CD4-positive, alpha-beta T cell (primary cell): ENCODE measurements at regions of chr21 and their contacts with region 1.

Region 1: GRCh38 chr21:45439161-45439872 is 34.4 kb downstream of the COL18A1 start:
- DNase-seq: peak; percentile 73 to 92 (median 84)
- ATAC-seq: peak; percentile 85
- H3K4me3 ChIP-seq: peak overlapping the region; percentile 38
- H3K4me3 Mint-ChIP-seq: peak overlapping the region; percentile 74
- H3K27ac ChIP-seq: no peak overlapping the region
- H3K27ac Mint-ChIP-seq: peak overlapping the region; percentile 73
- H3K4me1 ChIP-seq: peaks cover 21% of the 10 kb centered on the region
- H3K4me1 Mint-ChIP-seq: peaks cover 21% of the 10 kb centered on the region
- H3K27me3 ChIP-seq: peaks cover 0 to 2% of the 10 kb centered on the region in 2 experiments
- H3K27me3 Mint-ChIP-seq: peaks cover 8% of the 10 kb centered on the region
- CTCF ChIP-seq: peak; percentile 91

Region 2: GRCh38 chr21:44949779-44950198 is 489.5 kb before region 1 on chr21:
- CTCF ChIA-PET with region 1: no interaction called
- POLR2A ChIA-PET with region 1: no interaction called
- intact Hi-C with region 1: loop called in 1 of 2 experiments (anchors 10 kb)
- DNase-seq: peak; percentile 73 to 91 (median 82)
- ATAC-seq: peak; percentile 88
- H3K4me3 ChIP-seq: no peak overlapping the region
- H3K4me3 Mint-ChIP-seq: no peak overlapping the region
- H3K27ac ChIP-seq: no peak overlapping the region
- H3K27ac Mint-ChIP-seq: no peak overlapping the region
- H3K4me1 ChIP-seq: peaks cover 16% of the 10 kb centered on the region
- H3K4me1 Mint-ChIP-seq: peaks cover 5% of the 10 kb centered on the region
- H3K27me3 ChIP-seq: no peaks in the 10 kb centered on the region
- H3K27me3 Mint-ChIP-seq: no peaks in the 10 kb centered on the region
- CTCF ChIP-seq: peak; percentile 92

Region 3: DNA sequence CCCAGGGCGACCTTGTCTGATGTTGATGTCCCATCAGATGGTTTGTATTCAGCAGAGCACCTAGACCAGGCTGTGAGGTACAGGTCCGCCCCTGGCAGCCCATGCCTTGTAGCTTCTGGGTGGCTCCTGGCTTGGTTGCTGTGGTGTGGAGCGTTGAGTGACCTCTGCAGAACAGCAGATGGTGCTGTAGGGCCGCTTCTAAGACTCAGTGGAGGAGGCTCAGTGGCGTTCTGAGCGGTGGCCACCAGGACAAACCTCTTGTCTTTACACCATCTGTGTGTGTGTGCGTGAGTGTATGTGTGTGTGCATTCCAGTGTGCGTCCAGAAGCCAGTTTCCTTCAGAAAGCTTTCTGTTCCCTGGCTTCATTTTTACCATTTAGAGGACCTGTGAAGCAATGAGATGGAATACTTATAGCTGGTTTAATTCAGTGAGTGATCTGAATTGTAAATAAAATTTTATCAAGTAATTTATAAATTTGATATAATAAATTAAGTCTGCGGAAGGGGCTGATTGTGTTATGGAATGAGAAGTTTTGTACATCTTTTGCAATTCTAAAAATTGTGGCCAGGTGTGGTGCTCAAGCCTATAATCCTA is 298.9 kb before region 1 on chr21:
- CTCF ChIA-PET with region 1: no interaction called
- POLR2A ChIA-PET with region 1: no interaction called
- intact Hi-C with region 1: loop called in 1 of 2 experiments (anchors 1 kb)
- DNase-seq: peak; percentile 30 to 83 (median 50)
- ATAC-seq: peak; percentile 93
- H3K4me3 ChIP-seq: no peak overlapping the region
- H3K4me3 Mint-ChIP-seq: no peak overlapping the region
- H3K27ac ChIP-seq: no peak overlapping the region
- H3K27ac Mint-ChIP-seq: no peak overlapping the region
- H3K4me1 ChIP-seq: peaks cover 12% of the 10 kb centered on the region
- H3K4me1 Mint-ChIP-seq: peaks cover 21% of the 10 kb centered on the region
- H3K27me3 ChIP-seq: no peaks in the 10 kb centered on the region
- H3K27me3 Mint-ChIP-seq: no peaks in the 10 kb centered on the region
- CTCF ChIP-seq: peak; percentile 48

Region 4: DNA sequence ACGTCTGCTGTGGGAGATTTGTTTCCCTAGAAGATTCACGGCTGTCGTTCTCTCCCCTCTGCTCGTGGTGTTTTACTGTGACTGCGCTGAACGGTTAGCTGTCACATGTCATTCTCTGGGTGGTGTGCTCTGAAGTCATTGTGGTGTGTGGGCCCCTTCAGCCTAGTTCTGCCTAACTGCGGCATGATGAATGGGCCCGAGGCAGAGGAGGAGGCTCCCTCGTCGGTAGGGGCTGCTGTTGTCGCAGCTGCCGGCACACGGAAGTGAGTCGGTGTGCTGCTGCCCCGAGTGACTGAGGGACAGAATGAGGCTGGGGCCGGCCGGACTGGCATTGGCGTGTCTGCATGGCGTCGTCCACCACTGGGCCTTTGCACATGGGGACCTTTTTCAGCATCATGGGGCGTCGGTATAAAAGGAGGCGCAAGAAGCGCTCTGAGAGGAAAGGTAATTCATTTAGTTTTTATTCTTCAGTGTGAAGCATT is 287.0 kb before region 1 on chr21:
- CTCF ChIA-PET with region 1: interaction called, 3 read pairs
- POLR2A ChIA-PET with region 1: no interaction called
- intact Hi-C with region 1: loop called in 1 of 2 experiments (anchors 1 kb)
- DNase-seq: peak; percentile 36 to 85 (median 61)
- ATAC-seq: peak; percentile 85
- H3K4me3 ChIP-seq: no peak overlapping the region
- H3K4me3 Mint-ChIP-seq: peak overlapping the region; percentile 46
- H3K27ac ChIP-seq: no peak overlapping the region
- H3K27ac Mint-ChIP-seq: peak overlapping the region; percentile 73
- H3K4me1 ChIP-seq: peaks cover 31% of the 10 kb centered on the region
- H3K4me1 Mint-ChIP-seq: peaks cover 52% of the 10 kb centered on the region
- H3K27me3 ChIP-seq: no peaks in the 10 kb centered on the region
- H3K27me3 Mint-ChIP-seq: no peaks in the 10 kb centered on the region
- CTCF ChIP-seq: peak; percentile 69

Region 5: GRCh38 chr21:45357436-45358260 is 81.7 kb before region 1 on chr21:
- CTCF ChIA-PET with region 1: no interaction called
- POLR2A ChIA-PET with region 1: no interaction called
- intact Hi-C with region 1: loop called in 1 of 2 experiments (anchors 10 kb)
- DNase-seq: no peak
- ATAC-seq: no peak
- H3K4me3 ChIP-seq: no peak overlapping the region
- H3K4me3 Mint-ChIP-seq: no peak overlapping the region
- H3K27ac ChIP-seq: no peak overlapping the region
- H3K27ac Mint-ChIP-seq: no peak overlapping the region
- H3K4me1 ChIP-seq: no peaks in the 10 kb centered on the region
- H3K4me1 Mint-ChIP-seq: peaks cover 11% of the 10 kb centered on the region
- H3K27me3 ChIP-seq: peaks cover 0 to 10% of the 10 kb centered on the region in 2 experiments
- H3K27me3 Mint-ChIP-seq: peaks cover 12% of the 10 kb centered on the region
- CTCF ChIP-seq: no peak

Region 6: GRCh38 chr21:45865106-45865832 is 426.0 kb after region 1 on chr21:
- CTCF ChIA-PET with region 1: no interaction called
- POLR2A ChIA-PET with region 1: no interaction called
- intact Hi-C with region 1: no loop called
- DNase-seq: no peak
- ATAC-seq: no peak
- H3K4me3 ChIP-seq: no peak overlapping the region
- H3K4me3 Mint-ChIP-seq: no peak overlapping the region
- H3K27ac ChIP-seq: no peak overlapping the region
- H3K27ac Mint-ChIP-seq: no peak overlapping the region
- H3K4me1 ChIP-seq: peaks cover 3% of the 10 kb centered on the region
- H3K4me1 Mint-ChIP-seq: no peaks in the 10 kb centered on the region
- H3K27me3 ChIP-seq: no peaks in the 10 kb centered on the region
- H3K27me3 Mint-ChIP-seq: no peaks in the 10 kb centered on the region
- CTCF ChIP-seq: no peak